ENCODE measurements at regions of chr6 and their contacts with region 1.

Region 1: DNA sequence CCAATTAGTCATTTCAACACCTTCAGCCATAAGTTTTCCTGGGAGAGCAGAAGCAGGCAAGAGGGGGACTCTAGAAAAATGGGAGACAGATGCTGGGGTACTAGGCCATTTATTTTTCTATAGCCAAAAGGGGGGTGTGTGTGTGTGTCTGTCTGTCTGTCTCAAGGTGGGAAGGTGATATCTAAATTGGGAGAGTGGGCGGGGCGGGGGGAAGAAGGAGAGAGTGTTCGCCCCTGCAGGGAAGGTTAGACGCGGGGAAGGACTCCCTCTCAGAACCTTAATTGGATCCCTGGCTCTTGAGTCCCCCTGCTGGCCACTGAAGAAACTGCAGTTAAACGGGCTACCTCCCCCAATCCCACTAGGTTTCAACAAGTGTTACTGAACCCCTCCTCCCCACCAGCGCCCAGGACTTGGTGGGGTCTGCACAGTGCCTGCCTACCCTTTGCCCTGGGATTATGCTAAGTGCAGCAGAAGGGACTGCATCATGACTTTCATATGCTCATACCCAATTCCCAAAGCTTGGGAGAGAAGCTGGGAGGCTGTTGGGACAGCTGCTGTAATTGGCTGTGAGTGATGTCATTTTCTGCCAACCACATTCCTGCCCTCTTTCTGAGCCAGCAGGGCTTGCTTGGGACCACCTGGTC is 45.8 kb downstream of the FOXP4 start:
- DNase-seq: peak; percentile 43 to 77
- ATAC-seq: peak; percentile 78 to 90
- H3K4me3 ChIP-seq: no peak overlapping the region
- H3K27ac ChIP-seq: no peak overlapping the region
- H3K4me1 ChIP-seq: peaks cover 5% of the 10 kb centered on the region; the same call in 2 of the 3 replicates
- CTCF ChIP-seq: peak; percentile 73
- EP300 ChIP-seq: no peak
- POLR2A ChIP-seq: no peak
- RAD21 ChIP-seq: peak; percentile 90 to 92

Region 2: DNA sequence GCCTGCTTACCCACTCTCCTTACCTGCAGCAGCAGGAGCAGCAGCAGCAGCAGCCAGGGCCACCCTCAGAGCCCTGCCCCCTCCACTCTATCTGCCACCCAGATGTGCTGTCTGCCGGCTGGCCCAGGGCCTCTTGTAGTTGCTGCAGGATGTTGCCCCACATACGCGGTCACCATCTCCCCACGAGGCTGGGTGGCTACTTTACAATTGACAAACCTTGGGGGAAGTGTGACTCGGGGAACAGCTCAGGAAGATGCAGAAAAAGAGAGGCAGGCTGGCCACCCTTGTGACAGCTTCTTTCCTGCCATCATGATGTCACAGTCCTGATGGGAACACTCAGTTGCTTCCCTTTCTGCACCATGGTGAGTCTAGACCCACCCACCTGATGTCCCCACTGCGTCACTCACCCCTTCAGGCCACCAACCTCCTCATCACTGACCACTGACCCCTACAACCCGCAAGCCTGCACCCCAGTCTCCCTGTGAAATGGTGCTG is 320.0 kb before region 1 on chr6:
- CTCF ChIA-PET with region 1: no interaction called
- POLR2A ChIA-PET with region 1: no interaction called
- DNase-seq: no peak
- ATAC-seq: no peak
- H3K4me3 ChIP-seq: no peak overlapping the region
- H3K27ac ChIP-seq: no peak overlapping the region
- H3K4me1 ChIP-seq: no peaks in the 10 kb centered on the region
- CTCF ChIP-seq: no peak
- EP300 ChIP-seq: no peak
- POLR2A ChIP-seq: no peak
- RAD21 ChIP-seq: no peak

Region 3: DNA sequence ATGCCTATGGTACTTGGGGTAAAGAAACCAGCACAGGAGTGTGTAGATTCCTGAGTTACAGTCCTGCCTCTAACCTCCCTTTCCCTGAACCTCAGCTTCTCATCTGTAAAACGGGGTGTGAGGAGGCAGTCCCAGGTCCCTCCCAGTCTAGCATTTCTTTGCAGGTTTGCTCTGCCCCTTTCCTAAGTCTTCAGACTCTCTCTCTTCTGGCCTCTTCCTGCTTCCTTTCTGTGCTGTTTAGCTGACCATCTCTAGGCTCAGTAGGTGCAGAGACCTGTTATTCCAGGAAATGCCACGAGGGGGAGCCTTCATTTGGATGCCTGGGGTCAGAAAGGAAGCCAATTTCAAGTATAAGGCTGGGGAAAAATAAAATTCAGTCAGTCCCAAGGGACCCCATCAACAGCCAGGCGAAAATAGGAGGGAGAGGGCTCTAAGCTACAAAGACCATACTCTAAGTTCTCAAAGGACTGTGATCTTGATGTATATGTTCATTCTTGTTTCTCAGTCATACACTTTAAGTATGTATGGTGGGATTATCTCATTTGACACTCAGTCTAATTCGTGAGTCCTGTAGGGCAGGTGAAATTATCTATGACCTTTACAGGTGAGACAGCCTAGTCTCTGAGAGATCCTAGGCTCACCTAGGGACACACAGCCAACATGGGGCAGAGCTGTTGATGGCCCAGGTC is 167.5 kb before region 1 on chr6:
- CTCF ChIA-PET with region 1: interaction called, 44 read pairs
- POLR2A ChIA-PET with region 1: no interaction called
- DNase-seq: peak; percentile 64
- ATAC-seq: peak; percentile 75 to 89; a peak in 5 of 6 replicates
- H3K4me3 ChIP-seq: no peak overlapping the region
- H3K27ac ChIP-seq: peak overlapping the region in 1 of 2 experiments; percentile 59; a peak in 2 of 6 replicates
- H3K4me1 ChIP-seq: 0 out of 3 replicates have a peak, but pooled peaks cover 4% of the 10 kb centered on the region
- CTCF ChIP-seq: peak; percentile 63
- EP300 ChIP-seq: no peak
- POLR2A ChIP-seq: no peak
- RAD21 ChIP-seq: peak; percentile 59 to 63; a peak in 4 of 5 replicates

Region 4: GRCh38 chr6:41581381-41581991 is 10.5 kb before region 1 on chr6:
- CTCF ChIA-PET with region 1: interaction called, 11 read pairs
- POLR2A ChIA-PET with region 1: no interaction called
- DNase-seq: peak; percentile 81 to 82
- ATAC-seq: peak; percentile 69 to 83
- H3K4me3 ChIP-seq: no peak overlapping the region
- H3K27ac ChIP-seq: peak overlapping the region; percentile 89 to 92
- H3K4me1 ChIP-seq: peaks cover 84% of the 10 kb centered on the region
- CTCF ChIP-seq: no peak
- EP300 ChIP-seq: peak in 1 of 2 experiments; percentile 49; a peak in 1 of 5 replicates
- POLR2A ChIP-seq: no peak
- RAD21 ChIP-seq: no peak; a peak in 1 of 5 replicates